Endothelial cell of umbilical vein (primary cell): ENCODE measurements at regions of chr4 and their contacts with region 1.

Region 1: DNA sequence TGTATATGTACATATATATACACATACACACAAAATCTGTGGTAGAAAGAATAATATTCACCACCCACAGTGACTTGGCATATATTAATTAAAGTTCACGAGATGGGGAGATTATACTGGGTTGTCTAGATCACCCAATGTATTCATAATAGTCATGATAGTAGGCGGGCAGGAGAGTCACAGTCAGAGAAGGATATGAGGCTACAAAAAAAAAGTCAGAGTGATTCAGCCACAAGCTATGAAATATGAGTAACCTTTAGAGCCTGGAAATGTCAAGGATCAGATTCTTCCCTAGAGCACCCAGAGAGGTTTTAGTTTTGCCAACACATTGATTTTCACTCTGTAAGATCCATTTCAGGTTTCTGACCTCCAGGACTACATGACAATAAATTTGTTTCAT is 501.9 kb downstream of the GABRG1 start:
- DNase-seq: no peak
- H3K4me3 ChIP-seq: no peak overlapping the region
- H3K27ac ChIP-seq: no peak overlapping the region
- H3K4me1 ChIP-seq: no peaks in the 10 kb centered on the region
- H3K27me3 ChIP-seq: no peaks in the 10 kb centered on the region
- CTCF ChIP-seq: no peak
- POLR2A ChIP-seq: no peak

Region 2: DNA sequence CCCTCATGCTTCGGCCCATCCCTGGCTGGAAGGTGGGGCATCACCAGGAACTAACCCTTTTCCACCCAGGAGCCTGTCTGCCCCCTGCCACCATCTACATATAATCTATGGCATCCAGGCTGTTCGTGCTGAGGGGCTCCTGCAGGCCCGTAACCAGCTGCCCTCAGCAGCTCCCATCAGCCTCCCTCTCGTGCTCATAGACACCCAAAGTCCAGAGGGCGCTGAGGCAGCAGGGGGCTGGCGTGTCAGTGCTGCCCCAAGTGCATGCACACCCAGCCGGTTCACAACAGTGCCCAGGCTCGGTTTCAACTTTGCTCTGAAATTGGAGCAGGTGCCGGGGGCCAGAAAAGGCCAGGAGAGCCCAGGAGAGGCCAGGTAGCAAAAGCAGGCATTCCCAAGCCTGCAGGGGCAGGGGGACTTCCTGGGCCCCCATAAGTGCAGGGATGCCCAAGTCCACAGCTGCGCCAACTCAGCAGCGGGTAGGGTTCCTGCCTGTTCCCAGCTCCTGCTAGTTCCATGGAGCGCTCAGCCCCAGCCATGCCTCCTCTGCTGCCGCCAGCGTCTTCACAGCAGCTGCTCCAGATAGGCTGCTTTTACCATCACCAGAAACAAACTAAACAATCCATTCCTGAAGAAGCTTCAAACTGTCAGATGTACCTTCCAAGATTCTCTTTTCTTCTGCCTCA is 337.4 kb before region 1 on chr4:
- CTCF ChIA-PET with region 1: no interaction called
- POLR2A ChIA-PET with region 1: no interaction called
- dilution Hi-C with region 1: no loop called
- intact Hi-C with region 1: no loop called
- DNase-seq: no peak
- H3K4me3 ChIP-seq: no peak overlapping the region
- H3K27ac ChIP-seq: no peak overlapping the region
- H3K4me1 ChIP-seq: no peaks in the 10 kb centered on the region
- H3K27me3 ChIP-seq: no peaks in the 10 kb centered on the region
- CTCF ChIP-seq: no peak
- POLR2A ChIP-seq: no peak

Region 3: DNA sequence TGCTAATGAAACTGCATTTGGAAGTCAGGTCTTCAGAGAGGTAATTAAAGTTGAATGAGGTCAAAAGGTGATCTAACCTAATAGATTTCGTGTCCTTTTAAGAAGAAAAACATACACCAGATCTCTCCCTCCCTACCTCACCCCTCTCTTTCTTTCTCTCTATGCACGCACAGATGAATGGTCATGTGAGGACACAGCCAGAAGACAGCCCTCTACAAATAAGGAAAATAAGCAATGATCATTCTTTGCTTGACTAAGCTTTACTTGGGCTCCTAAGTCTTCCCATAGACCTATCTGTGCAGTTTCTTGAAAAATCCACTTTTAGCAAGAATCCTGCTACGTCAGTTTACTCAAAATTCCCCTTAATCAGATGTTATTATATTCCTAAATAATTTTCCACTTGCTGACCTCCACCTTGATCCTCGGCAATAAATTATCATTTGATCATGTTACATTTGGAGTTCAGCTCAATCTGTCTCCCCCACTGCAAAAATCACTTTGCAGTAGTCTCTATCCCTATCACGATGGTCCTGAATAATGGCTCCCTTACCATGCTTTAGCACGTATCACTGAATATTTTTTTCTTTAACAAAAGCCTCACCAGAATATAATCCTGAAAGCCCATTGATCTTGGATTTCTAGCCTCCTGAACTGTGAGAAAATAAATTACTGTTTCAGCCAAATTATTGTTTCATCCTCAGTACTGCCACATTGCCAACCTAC is 25.4 kb before region 1 on chr4:
- CTCF ChIA-PET with region 1: no interaction called
- POLR2A ChIA-PET with region 1: no interaction called
- dilution Hi-C with region 1: no loop called
- intact Hi-C with region 1: loop called (anchors 2 kb)
- DNase-seq: no peak
- H3K4me3 ChIP-seq: no peak overlapping the region
- H3K27ac ChIP-seq: no peak overlapping the region
- H3K4me1 ChIP-seq: no peaks in the 10 kb centered on the region
- H3K27me3 ChIP-seq: no peaks in the 10 kb centered on the region
- CTCF ChIP-seq: no peak
- POLR2A ChIP-seq: no peak